Heart left ventricle (tissue), 16 donors: ENCODE measurements at regions of chr18 and their contacts with region 1.

Region 1: DNA sequence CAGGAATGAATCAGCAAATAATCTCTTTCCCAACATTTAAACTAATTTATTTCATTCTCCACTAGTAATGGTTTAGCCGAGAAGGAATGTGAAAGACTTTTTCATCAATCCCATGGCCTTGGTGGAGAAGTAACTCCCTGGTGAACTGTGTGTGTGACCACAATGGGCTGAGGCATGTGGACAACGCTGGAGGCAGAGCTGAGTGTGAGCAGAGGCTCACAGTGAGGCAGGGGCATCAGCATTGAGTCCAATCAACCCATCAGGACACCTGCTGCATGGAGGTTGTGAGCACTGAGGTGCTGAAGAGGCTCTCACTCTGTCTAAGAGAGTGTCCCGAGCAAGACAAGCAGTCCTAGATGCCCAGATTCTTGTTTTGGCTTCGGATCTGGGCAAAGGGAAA is 78.6 kb downstream of the ZNF519 start:
- DNase-seq: no peak
- ATAC-seq: no peak
- H3K4me3 ChIP-seq: no peak overlapping the region
- H3K27ac ChIP-seq: no peak overlapping the region
- H3K4me1 ChIP-seq: no peaks in the 10 kb centered on the region
- H3K27me3 ChIP-seq: no peaks in the 10 kb centered on the region
- CTCF ChIP-seq: no peak
- POLR2A ChIP-seq: no peak

Region 2: DNA sequence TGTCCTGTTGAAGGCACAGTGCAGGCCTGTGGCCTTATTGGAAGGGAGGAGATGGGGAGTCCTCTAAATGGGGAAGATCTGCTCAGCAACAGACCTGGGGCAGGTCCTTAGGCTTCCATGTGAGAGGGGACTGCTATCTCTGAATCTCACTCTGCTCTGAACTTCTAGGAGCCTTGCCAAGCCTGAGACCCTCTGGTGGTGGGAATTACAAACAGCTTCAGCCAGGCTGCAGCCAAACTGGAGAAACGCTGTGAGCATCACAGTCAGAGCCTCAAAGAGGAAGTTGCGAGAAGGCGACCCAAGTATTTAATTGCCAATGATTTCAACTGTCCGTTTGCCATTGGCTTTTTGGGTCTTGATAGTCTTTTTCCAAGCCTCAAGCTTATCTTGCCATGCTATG is 71.5 kb before region 1 on chr18:
- intact Hi-C with region 1: loop called in 1 of 10 experiments (anchors 10 kb)
- DNase-seq: no peak
- ATAC-seq: no peak
- H3K4me3 ChIP-seq: no peak overlapping the region
- H3K27ac ChIP-seq: no peak overlapping the region
- H3K4me1 ChIP-seq: no peaks in the 10 kb centered on the region
- H3K27me3 ChIP-seq: no peaks in the 10 kb centered on the region
- CTCF ChIP-seq: no peak
- POLR2A ChIP-seq: no peak

Region 3: DNA sequence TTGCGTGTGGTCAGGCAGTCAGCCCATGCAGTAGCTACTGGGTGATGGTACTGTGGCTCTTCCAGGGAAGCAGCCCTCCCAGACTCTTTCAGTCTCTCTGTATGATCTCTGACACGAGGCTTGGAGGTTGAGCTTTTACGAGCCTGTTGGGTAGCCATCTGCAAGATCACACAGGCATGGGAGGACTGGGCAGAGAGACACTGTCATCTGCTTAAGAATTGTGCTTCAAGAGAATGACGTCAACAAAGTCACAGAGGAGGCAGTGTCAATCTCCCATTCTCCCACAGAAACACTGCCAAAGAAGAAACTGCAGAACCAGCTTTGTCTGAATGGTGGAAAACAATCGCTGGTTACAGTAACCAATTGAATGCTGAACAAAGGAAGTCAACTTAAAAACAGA is 59.9 kb before region 1 on chr18:
- intact Hi-C with region 1: loop called in 3 of 10 experiments (anchors 10 kb)
- DNase-seq: no peak
- ATAC-seq: no peak
- H3K4me3 ChIP-seq: no peak overlapping the region
- H3K27ac ChIP-seq: no peak overlapping the region
- H3K4me1 ChIP-seq: no peaks in the 10 kb centered on the region
- H3K27me3 ChIP-seq: no peaks in the 10 kb centered on the region
- CTCF ChIP-seq: no peak
- POLR2A ChIP-seq: no peak

Region 4: GRCh38 chr18:14104906-14105748 is 51.5 kb after region 1 on chr18:
- intact Hi-C with region 1: loop called in 1 of 10 experiments (anchors 10 kb)
- DNase-seq: no peak
- ATAC-seq: no peak
- H3K4me3 ChIP-seq: no peak overlapping the region
- H3K27ac ChIP-seq: no peak overlapping the region
- H3K4me1 ChIP-seq: no peaks in the 10 kb centered on the region
- H3K27me3 ChIP-seq: no peaks in the 10 kb centered on the region
- CTCF ChIP-seq: no peak
- POLR2A ChIP-seq: no peak